ENCODE measurements at regions of chr1 and their contacts with region 1.

Region 1: DNA sequence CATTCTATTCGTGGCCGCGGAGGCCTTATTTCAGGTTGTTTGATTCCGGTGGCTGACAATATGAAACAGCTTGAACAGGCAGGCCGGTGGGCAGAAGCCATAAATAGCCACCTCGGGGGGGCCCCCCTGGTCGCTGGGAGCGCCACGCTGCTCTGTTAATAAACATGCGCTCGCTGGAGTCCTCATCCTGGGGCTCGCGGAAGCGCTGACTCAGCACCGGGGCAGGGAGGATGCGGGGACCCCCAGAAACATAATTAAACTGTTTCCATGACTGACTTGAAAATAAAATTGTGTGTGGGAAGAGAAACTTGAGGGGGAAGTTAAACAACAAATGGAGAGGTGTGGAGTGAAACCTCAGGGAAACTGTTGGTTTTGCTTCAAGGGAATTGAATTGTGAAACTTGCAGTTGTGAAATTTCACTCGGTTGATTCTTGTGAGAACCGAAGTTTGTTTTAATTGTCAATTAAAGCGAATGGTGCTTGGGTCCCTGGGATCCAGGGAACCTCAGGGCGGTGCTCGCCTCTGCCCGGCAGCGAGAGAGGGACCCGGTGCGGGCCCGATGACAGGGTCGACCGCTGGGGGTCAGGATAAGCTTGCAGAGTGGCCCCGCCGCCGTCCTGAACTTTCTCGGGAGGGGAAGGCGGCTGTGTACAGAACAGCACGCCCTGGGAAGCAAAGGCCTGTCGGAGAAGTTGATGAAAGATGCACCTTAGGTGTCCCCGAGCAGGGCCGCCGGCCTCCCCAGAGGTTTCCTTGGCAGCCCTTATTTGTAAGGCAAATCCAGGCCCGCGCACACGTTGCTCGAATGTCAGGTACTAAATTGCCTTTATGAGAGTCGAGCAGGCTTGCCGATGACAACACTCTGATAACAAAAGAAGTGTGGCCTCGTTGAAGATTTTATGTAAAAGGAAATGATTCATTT is 176.9 kb upstream of the LMO4 start:
- DNase-seq: peak in 5 of 9 donors; percentile 1 to 53 (median 14)
- ATAC-seq: peak; percentile 71
- H3K4me3 ChIP-seq: peak overlapping the region; percentile 45
- H3K4me3 Mint-ChIP-seq: peak overlapping the region; percentile 80 to 94 (median 84)
- H3K27ac ChIP-seq: no peak overlapping the region
- H3K27ac Mint-ChIP-seq: peak overlapping the region in 5 of 9 donors; percentile 4 to 32 (median 7)
- H3K4me1 ChIP-seq: no peaks in the 10 kb centered on the region
- H3K4me1 Mint-ChIP-seq: peaks cover 8 to 13% (median 11%) of the 10 kb centered on the region in 7 donors
- H3K27me3 ChIP-seq: peaks cover 0 to 7% of the 10 kb centered on the region in 2 donors
- H3K27me3 Mint-ChIP-seq: peaks cover 40 to 67% (median 46%) of the 10 kb centered on the region in 5 donors

Region 2: GRCh38 chr1:87575528-87575927 is 423.8 kb after region 1 on chr1:
- CTCF ChIA-PET with region 1: no interaction called
- POLR2A ChIA-PET with region 1: no interaction called
- intact Hi-C with region 1: no loop called
- DNase-seq: no peak
- ATAC-seq: no peak
- H3K4me3 ChIP-seq: no peak overlapping the region
- H3K4me3 Mint-ChIP-seq: no peak overlapping the region
- H3K27ac ChIP-seq: no peak overlapping the region
- H3K27ac Mint-ChIP-seq: no peak overlapping the region
- H3K4me1 ChIP-seq: no peaks in the 10 kb centered on the region
- H3K4me1 Mint-ChIP-seq: no peaks in the 10 kb centered on the region
- H3K27me3 ChIP-seq: no peaks in the 10 kb centered on the region
- H3K27me3 Mint-ChIP-seq: peaks cover 0 to 10% (median 4%) of the 10 kb centered on the region in 5 donors

Region 3: DNA sequence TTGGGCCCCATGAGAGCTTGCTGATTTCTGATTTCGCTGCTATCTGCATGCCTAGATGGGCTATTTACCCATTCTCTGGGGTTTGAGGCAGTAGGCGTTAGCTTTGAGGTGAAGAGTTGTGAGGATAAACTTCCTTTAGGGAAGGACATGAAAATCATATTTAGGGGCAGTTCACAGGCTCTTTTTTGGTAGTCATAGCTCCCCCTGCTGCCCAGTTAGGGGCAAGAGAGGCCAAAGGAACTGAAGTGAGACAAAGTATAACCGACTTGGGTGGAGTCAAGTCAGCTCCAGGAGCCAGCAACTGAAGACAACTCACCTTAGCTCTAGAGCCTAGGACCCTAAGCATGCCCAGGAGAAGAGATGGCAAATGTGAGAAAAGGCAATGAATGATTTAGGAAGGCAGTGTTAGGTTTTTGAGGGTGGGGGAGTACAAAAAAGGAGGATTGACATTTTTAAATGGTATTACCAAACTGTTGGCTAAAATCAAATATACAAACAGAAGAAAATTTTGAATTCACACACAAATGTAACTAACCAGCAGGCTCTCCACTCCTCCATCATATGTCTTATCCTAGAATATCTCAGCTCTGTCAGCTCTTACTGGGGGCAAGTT is 802.1 kb after region 1 on chr1:
- CTCF ChIA-PET with region 1: no interaction called
- POLR2A ChIA-PET with region 1: no interaction called
- intact Hi-C with region 1: loop called in 1 of 2 experiments (anchors 5 kb)
- DNase-seq: peak; percentile 7 to 54 (median 36)
- ATAC-seq: peak; percentile 70
- H3K4me3 ChIP-seq: no peak overlapping the region
- H3K4me3 Mint-ChIP-seq: no peak overlapping the region
- H3K27ac ChIP-seq: no peak overlapping the region
- H3K27ac Mint-ChIP-seq: no peak overlapping the region
- H3K4me1 ChIP-seq: no peaks in the 10 kb centered on the region
- H3K4me1 Mint-ChIP-seq: no peaks in the 10 kb centered on the region
- H3K27me3 ChIP-seq: no peaks in the 10 kb centered on the region
- H3K27me3 Mint-ChIP-seq: peaks cover 4 to 25% (median 8%) of the 10 kb centered on the region in 5 donors